ENCODE measurements at regions of chr1 and their contacts with region 1.

Region 1: DNA sequence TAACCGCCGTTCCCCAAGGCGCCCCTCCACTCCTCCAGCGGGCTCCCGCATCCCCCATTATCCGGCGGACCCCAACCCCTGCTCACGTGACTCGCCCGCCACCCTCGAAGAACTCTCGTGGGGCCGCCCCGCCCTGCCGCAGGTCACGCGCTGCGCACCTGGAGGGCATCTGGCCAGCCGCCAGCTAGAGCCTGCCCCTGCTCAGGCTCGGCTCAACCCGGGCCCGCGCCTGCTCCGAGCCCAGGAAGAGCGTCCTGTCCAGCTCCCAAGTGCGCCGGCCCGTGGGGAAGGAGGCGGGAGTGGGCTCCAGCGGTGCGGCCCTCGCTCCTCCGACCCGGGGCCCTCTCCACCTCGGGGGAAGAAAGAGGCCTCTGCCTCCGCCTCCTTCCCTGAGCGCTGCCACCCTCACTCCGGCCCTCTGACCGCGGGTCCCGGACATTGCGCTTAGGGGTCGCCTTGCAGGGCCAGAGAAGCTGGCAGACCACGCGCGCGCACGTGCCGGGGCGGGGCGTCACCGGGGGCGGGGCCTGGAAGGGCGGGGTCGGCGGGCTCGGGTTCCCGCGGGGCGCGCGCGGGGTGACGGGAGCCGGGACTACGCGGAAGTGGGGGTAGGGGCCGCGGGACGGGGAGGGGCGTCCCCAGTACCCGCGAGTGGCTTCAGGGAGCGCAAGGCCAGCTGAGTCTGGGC is 28.4 kb downstream of the HMGN2 start:
- H3K4me3 Mint-ChIP-seq: peak overlapping the region; percentile 89
- H3K27ac Mint-ChIP-seq: peak overlapping the region; percentile 94
- H3K4me1 Mint-ChIP-seq: peaks cover 29% of the 10 kb centered on the region
- H3K27me3 Mint-ChIP-seq: no peaks in the 10 kb centered on the region

Region 2: GRCh38 chr1:26372039-26372438 is 128.6 kb before region 1 on chr1:
- intact Hi-C with region 1: no loop called
- H3K4me3 Mint-ChIP-seq: no peak overlapping the region
- H3K27ac Mint-ChIP-seq: no peak overlapping the region
- H3K4me1 Mint-ChIP-seq: peaks cover 36% of the 10 kb centered on the region
- H3K27me3 Mint-ChIP-seq: peaks cover 28% of the 10 kb centered on the region

Region 3: DNA sequence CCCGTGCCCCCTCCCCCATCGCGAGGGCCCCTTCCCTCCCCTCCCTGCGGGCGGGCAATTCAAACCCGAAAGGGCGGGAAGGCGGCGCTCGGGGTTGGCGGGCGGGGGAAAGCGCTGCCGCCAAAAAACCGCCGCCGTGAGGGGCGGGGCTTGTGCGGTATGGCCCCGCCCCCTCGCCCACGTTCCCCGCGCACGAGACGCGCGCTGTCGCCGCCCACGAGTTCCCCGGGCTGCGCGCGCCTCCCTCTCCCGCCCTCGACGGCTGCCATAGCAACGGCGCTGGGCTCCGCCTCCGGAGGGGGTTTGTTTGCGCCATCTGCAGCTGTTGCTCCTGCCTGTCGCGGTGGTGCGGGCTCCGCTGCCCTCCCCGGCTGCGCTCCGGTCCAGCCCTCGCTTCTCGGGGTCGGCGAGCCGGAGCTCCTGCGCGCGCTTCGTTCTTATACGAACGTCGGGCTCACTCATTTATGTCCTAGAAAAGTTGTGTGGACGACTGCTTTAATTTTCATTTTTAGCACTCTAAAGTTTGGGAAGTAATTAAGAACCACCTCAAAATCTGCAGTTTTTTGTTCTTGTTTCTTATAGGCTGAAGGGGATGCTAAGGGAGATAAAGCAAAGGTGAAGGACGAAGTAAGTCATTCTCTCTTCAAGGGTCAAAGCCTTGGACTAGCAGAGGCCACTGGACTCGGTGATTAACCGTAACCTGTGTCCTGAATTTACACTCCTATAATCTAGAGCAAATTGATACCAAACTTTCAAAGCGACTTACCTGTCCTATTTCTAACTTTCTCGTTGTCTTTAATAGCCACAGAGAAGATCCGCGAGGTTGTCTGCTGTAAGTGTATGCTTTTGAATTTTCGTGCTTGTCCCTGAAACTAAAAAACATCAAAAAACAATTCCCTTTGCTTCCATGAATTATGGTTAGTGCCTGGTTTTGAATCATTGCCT is 27.5 kb before region 1 on chr1:
- intact Hi-C with region 1: loop called (anchors 2 kb)
- H3K4me3 Mint-ChIP-seq: peak overlapping the region; percentile 86
- H3K27ac Mint-ChIP-seq: peak overlapping the region; percentile 94
- H3K4me1 Mint-ChIP-seq: peaks cover 41% of the 10 kb centered on the region
- H3K27me3 Mint-ChIP-seq: no peaks in the 10 kb centered on the region

Region 4: GRCh38 chr1:26541816-26542711 is 41.4 kb after region 1 on chr1:
- intact Hi-C with region 1: loop called (anchors 5 kb)
- H3K4me3 Mint-ChIP-seq: peak overlapping the region; percentile 91
- H3K27ac Mint-ChIP-seq: peak overlapping the region; percentile 92
- H3K4me1 Mint-ChIP-seq: peaks cover 93% of the 10 kb centered on the region
- H3K27me3 Mint-ChIP-seq: no peaks in the 10 kb centered on the region

Measured in dendritic cell treated with granulocyte-macrophage colony-stimulating factor and Interleukin-4, amounts not matched to agents 40 ng/mL and 50 ng/mL, for 4 days (primary cell).